Activated T-helper 1 cell treated with anti-CD3 and anti-CD28 coated beads, Interleukin-12 subunit alpha, Interleukin-12 subunit beta, Interleukin-2, Interleukin-4 antibody, amounts not matched to agents 30 ng/mL and 10 ng/mL and 1 ng/mL, durations not matched to agents 14 hours and 24 hours and 36 hours (primary cell): ENCODE measurements at regions of chr1 and their contacts with region 1.

Region 1: DNA sequence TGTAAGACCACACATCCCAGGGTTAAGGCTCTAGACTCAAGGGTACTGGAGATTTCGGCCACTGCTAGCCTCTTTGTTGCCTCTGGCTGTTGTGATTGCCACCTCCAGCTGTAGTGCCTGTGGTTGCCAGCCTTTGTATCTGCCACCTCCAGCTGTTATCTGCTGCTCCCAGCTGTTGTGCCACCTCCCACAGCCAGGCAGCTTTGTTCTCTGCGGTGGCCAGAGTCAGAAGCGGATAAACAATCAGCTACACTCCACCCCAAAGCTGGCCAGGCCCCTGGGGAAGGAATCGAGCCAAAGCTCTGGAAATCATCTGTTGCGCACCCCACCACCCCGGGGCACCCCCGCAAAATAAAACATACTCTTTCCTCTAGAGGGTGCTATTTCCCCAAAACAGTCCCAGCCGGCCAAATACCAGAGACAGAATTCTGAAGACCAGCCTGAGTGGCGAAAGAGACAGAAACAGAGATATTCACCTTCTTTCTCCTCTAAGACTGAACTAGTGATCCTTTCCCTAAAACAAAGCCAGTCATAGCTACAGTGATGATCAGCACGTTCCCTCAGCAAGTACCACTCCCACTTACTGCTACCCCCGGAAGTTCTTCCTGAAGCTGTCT is 14.8 kb upstream of the PIGM start:
- DNase-seq: peak; percentile 22
- H3K4me3 Mint-ChIP-seq: peak overlapping the region; percentile 55
- H3K27ac Mint-ChIP-seq: no peak overlapping the region
- H3K4me1 Mint-ChIP-seq: peaks cover 16% of the 10 kb centered on the region
- H3K27me3 Mint-ChIP-seq: peaks cover 16% of the 10 kb centered on the region

Region 2: GRCh38 chr1:159979257-159979656 is 67.3 kb before region 1 on chr1:
- intact Hi-C with region 1: no loop called
- DNase-seq: no peak
- H3K4me3 Mint-ChIP-seq: no peak overlapping the region
- H3K27ac Mint-ChIP-seq: no peak overlapping the region
- H3K4me1 Mint-ChIP-seq: no peaks in the 10 kb centered on the region
- H3K27me3 Mint-ChIP-seq: peaks cover 24% of the 10 kb centered on the region

Region 3: DNA sequence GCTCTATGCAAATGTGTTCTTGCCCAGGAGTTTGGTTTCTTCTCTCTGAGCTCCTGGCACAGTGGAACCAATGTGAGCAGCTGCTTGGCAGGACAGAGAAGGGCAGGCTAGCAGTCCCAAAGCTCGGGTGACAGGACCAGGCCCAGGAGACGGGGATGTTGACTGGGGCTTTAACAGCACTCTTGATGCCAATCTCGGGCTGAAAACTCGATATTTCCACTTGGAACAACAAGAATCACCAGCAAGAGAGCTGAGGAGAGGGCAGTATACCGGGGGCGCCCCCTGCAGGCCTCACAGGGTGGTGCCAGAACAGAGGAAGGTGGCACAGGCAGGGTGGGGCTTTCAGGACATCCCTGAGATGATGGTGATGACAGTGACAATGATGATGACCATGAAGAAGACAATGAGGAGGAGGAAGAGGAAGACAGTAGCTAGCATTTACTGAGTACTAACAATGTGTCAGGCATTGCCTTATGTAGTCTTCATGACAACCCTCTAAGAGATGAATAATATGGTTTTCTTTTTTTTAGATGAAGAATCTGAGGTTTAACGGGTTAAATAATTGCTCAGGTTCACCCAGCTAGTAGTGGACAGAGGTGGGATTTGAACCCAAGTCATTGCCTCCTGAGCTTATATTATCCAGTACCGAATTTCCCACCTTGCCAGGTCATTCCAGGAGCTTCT is 32.1 kb after region 1 on chr1:
- intact Hi-C with region 1: loop called (anchors 1 kb)
- DNase-seq: peak; percentile 47
- H3K4me3 Mint-ChIP-seq: no peak overlapping the region
- H3K27ac Mint-ChIP-seq: no peak overlapping the region
- H3K4me1 Mint-ChIP-seq: peaks cover 16% of the 10 kb centered on the region
- H3K27me3 Mint-ChIP-seq: peaks cover 51% of the 10 kb centered on the region

Region 4: DNA sequence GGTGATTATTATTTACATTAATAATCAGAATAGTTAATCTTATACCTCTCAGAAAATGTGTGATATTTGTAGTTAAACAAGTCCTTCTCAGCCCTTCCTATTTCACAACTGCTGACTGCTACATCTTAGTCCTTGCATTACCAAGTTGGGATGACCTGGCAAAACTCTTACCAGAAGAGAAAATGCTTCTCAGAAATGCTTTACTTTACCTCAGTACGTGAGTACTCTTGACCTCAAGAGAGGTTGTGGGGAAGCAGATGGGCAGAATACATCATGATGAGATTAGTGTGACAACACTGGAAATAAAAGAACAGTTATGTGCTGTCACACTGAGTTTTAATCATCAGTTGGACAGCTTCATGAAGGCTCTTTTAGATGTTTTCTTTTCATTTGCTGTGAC is 1304.9 kb after region 1 on chr1:
- intact Hi-C with region 1: no loop called
- DNase-seq: no peak
- H3K4me3 Mint-ChIP-seq: no peak overlapping the region
- H3K27ac Mint-ChIP-seq: no peak overlapping the region
- H3K4me1 Mint-ChIP-seq: no peaks in the 10 kb centered on the region
- H3K27me3 Mint-ChIP-seq: no peaks in the 10 kb centered on the region